Dendritic cell treated with granulocyte-macrophage colony-stimulating factor and Interleukin-4, amounts not matched to agents 40 ng/mL and 50 ng/mL, for 4 days (primary cell): ENCODE measurements at regions of chr11 and their contacts with region 1.

Region 1: DNA sequence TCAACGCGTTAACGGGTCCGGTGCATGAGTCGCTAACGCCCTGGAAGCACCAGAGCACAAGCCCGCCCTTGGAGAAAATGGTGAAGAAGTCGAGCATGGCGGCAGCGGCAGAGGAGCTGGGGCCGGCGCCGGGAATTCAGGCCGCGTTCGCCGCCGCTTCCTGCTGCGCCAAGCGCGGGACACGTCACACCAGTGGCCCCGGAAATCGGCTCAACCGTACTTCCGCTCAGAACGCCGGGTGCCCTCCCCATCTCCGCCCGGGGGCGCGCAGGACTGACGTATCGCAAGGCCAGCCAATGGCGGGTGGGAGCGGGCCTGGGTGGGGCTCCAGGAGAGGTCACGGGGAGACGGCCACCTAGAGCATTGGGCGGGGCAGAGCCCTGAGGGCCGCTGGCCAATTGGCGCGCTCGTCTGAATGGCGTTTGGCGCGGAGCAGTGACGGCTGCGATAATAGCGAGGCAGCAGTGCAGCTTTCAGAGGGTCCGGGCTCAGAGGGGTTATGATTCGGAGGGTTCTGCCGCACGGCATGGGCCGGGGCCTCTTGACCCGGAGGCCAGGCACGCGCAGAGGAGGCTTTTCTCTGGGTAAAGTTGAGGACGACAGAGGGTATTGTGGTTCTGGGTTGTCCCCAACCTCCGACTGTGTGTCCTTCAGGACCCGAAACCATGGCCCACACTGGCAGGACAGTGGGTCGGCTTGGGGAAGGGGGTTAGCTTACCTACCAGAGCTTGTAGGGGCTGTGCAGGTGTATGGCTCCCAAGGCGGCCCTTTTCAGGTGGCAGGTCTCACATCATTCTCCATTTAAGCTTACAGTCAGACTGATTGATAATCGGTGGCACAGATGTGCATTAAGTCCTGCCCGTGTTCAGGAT is at the starts of genes FOXRED1 and SRPRA:
- H3K4me3 Mint-ChIP-seq: peak within 1 kb of the TSS; percentile 94
- H3K27ac Mint-ChIP-seq: peak within 1 kb of the TSS; percentile 98
- H3K4me1 Mint-ChIP-seq: peaks cover 28% of the 10 kb centered on the region
- H3K27me3 Mint-ChIP-seq: no peaks in the 10 kb centered on the region

Region 2: GRCh38 chr11:126282736-126283591 is 14.0 kb after region 1 on chr11 and contains the start of gene TIRAP:
- intact Hi-C with region 1: loop called (anchors 1 kb)
- H3K4me3 Mint-ChIP-seq: peak within 1 kb of the TSS; percentile 98
- H3K27ac Mint-ChIP-seq: peak within 1 kb of the TSS; percentile 93
- H3K4me1 Mint-ChIP-seq: peaks cover 53% of the 10 kb centered on the region
- H3K27me3 Mint-ChIP-seq: no peaks in the 10 kb centered on the region

Region 3: GRCh38 chr11:126303623-126304456 is 34.9 kb after region 1 on chr11 and contains the start of gene DCPS:
- intact Hi-C with region 1: loop called (anchors 5 kb)
- H3K4me3 Mint-ChIP-seq: peak within 1 kb of the TSS; percentile 96
- H3K27ac Mint-ChIP-seq: peak within 1 kb of the TSS; percentile 87
- H3K4me1 Mint-ChIP-seq: peaks cover 34% of the 10 kb centered on the region
- H3K27me3 Mint-ChIP-seq: no peaks in the 10 kb centered on the region